Endothelial cell of umbilical vein (primary cell): ENCODE measurements at regions of chrX and their contacts with region 1.

Region 1: GRCh38 chrX:120213436-120214265 is 37.0 kb upstream of the ZBTB33 start:
- DNase-seq: peak; percentile 67
- H3K4me3 ChIP-seq: no peak overlapping the region
- H3K27ac ChIP-seq: no peak overlapping the region
- H3K4me1 ChIP-seq: no peaks in the 10 kb centered on the region
- H3K27me3 ChIP-seq: no peaks in the 10 kb centered on the region
- CTCF ChIP-seq: peak; percentile 66 to 81
- POLR2A ChIP-seq: no peak

Region 2: DNA sequence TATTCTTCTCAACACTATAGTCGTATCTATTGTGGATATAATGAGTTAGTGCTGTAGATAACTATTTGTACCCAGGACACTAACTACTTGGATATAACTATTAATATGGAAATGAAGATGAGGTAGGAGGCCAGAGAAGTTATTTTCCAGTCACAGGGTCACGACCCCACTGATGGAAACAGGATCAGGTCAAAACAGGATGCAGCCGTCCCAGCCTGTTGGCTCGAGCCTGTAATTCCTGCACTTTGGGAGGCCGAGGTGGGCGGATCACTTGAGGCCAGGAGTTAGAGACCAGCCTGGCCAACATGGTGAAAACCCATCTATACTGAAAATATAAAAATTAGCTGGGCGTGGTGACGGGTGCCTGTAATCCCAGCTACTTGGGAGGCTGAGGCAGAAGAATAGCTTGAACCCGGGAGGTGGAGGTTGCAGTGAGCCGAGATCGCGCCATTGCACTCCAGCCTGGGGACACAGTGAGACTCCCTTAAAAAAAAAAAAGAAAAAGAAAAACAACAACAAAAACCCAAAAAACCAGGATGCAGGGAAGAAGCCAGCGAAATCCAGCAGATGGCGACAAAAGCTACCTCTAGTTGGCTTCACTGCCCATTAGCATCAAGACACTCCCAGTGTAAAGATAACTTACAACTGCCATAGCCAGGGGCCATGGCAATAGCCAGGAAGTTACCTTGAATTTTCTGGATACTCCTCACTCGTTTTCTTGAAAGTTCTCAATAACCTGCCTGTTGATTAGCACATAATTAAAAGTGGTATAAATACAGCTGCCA is 232.2 kb before region 1 on chrX:
- CTCF ChIA-PET with region 1: interaction called, 10 read pairs
- POLR2A ChIA-PET with region 1: no interaction called
- dilution Hi-C with region 1: no loop called
- intact Hi-C with region 1: no loop called
- DNase-seq: peak; percentile 7
- H3K4me3 ChIP-seq: no peak overlapping the region
- H3K27ac ChIP-seq: no peak overlapping the region
- H3K4me1 ChIP-seq: no peaks in the 10 kb centered on the region
- H3K27me3 ChIP-seq: no peaks in the 10 kb centered on the region
- CTCF ChIP-seq: peak; percentile 31 to 47
- POLR2A ChIP-seq: no peak

Region 3: DNA sequence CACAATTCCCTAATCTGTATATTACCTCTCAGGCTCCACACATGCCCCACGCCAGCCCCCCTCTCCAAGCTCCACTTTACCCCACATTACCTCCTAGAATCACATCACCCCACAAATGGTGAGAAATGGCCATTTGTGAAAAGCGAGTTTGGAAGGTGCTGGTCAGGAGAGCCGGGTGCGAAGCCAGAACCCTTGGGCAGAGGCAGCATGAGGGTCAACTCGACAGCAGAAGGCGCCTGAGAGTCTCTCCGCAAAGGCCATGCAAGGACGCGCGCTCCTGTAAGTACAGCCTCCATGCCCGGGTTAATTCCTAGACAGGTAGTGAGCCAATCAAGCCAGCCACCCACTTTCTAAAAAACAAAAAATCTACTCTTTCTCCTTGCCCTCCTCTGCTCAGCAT is 12.8 kb before region 1 on chrX:
- CTCF ChIA-PET with region 1: interaction called, 19 read pairs
- POLR2A ChIA-PET with region 1: no interaction called
- dilution Hi-C with region 1: no loop called
- intact Hi-C with region 1: no loop called
- DNase-seq: no peak
- H3K4me3 ChIP-seq: no peak overlapping the region
- H3K27ac ChIP-seq: no peak overlapping the region
- H3K4me1 ChIP-seq: no peaks in the 10 kb centered on the region
- H3K27me3 ChIP-seq: peaks cover 0 to 1% of the 10 kb centered on the region in 2 experiments
- CTCF ChIP-seq: no peak
- POLR2A ChIP-seq: no peak

Region 4: GRCh38 chrX:120228187-120228908 is 14.7 kb after region 1 on chrX:
- CTCF ChIA-PET with region 1: interaction called, 23 read pairs
- POLR2A ChIA-PET with region 1: no interaction called
- dilution Hi-C with region 1: no loop called
- intact Hi-C with region 1: no loop called
- DNase-seq: no peak
- H3K4me3 ChIP-seq: no peak overlapping the region
- H3K27ac ChIP-seq: no peak overlapping the region
- H3K4me1 ChIP-seq: no peaks in the 10 kb centered on the region
- H3K27me3 ChIP-seq: no peaks in the 10 kb centered on the region
- CTCF ChIP-seq: no peak
- POLR2A ChIP-seq: no peak